Activated CD4-positive, alpha-beta memory T cell treated with anti-CD3 and anti-CD28 coated beads, Interleukin-2, amount 10 ng/mL, durations not matched to agents 7 days and 5 days (primary cell): ENCODE measurements at regions of chr1 and their contacts with region 1.

Region 1: DNA sequence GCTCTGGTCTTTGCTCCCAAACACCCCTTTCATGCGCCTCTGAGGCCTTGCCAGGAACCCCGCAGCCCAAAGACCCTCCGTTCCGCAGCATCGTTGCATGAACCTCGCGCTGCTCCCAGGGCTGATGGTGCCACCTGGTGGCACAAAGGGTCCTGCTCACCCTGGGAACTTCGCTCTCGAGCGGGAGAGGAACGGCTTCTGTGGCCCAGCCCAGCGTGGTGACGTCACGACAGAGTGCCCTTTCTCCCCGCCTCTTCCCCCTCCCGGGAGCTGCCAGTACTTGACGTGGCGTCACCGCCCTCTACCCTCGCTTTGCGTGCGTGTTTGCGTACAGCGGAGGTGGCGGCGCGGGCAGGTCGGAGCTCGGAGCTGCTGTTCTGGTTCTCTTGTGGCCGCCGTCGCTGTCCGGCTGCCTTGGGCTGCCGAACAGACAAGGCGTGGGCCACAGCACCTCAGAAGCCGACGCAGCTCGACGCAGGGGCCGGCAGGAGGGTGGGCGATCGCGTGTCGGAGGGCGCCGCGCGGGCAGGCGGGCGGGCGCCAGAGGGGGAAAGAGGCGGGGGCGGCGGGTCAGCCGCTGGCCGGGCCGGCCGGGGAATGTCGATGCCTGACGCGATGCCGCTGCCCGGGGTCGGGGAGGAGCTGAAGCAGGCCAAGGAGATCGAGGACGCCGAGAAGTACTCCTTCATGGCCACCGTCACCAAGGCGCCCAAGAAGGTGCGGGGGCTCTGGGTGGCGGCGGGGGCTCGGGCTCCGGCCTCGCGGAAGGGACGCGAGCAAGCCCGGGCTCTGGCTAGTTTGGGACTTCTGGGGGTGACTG is at the start of gene AHCYL1:
- DNase-seq: peak; percentile 99
- H3K4me3 Mint-ChIP-seq: peak within 1 kb of the TSS; percentile 99
- H3K27ac Mint-ChIP-seq: peak within 1 kb of the TSS; percentile 84
- H3K4me1 Mint-ChIP-seq: peaks cover 41% of the 10 kb centered on the region
- H3K27me3 Mint-ChIP-seq: peaks cover 2% of the 10 kb centered on the region
- total RNA-seq, gene AHCYL1: 56.5 to 57.0 TPM

Region 2: GRCh38 chr1:109649491-109649914 is 335.2 kb before region 1 on chr1:
- CTCF ChIA-PET with region 1: interaction called, 25 read pairs
- POLR2A ChIA-PET with region 1: no interaction called
- DNase-seq: no peak
- H3K4me3 Mint-ChIP-seq: no peak overlapping the region
- H3K27ac Mint-ChIP-seq: no peak overlapping the region
- H3K4me1 Mint-ChIP-seq: peaks cover 9% of the 10 kb centered on the region
- H3K27me3 Mint-ChIP-seq: peaks cover 46% of the 10 kb centered on the region

Region 3: DNA sequence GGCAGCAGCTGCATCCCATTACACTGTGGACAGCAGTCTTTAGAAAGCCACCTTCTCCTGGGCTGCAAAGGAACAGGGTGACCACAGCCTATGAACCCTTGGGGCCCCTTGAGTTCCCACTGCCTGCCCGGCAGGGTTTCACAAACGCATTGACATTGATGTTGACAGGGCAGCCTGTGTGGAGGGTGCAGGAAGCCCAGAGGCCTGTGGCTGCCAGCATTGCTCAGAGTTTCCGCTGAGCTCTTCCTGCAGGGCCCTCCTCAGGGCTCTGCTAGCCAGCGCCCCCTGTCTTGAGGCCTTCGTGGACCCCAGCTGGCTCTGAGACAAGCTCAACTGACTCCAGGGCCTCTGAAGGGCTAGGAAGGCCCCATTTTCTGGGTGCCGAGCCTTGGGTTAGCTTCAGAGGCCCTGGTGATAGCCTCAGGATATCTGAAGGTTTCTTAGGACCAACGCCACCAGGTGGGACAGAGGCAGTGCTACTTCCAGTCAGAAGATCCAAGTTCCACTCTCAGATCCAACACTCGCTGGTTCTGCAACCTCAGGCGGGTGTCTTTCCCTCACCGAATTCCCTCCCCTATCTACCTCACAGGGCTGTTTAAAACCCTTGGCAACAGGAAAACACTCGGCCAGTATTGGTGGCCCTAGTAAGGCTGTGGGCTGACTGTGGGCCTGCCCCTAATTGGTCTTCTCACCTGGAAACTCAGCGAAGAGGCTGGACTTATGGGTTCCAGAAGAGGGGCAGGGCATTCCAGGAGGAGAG is 193.8 kb before region 1 on chr1:
- CTCF ChIA-PET with region 1: interaction called, 655 read pairs
- POLR2A ChIA-PET with region 1: interaction called, 14 read pairs
- DNase-seq: peak; percentile 90
- H3K4me3 Mint-ChIP-seq: peak overlapping the region; percentile 21
- H3K27ac Mint-ChIP-seq: peak overlapping the region; percentile 95
- H3K4me1 Mint-ChIP-seq: peaks cover 92% of the 10 kb centered on the region
- H3K27me3 Mint-ChIP-seq: no peaks in the 10 kb centered on the region

Region 4: GRCh38 chr1:109910123-109910962 is 74.3 kb before region 1 on chr1 and contains the start of gene CSF1:
- CTCF ChIA-PET with region 1: interaction called, 27 read pairs
- POLR2A ChIA-PET with region 1: interaction called, 14 read pairs
- DNase-seq: peak; percentile 64
- H3K4me3 Mint-ChIP-seq: peak within 1 kb of the TSS; percentile 94
- H3K27ac Mint-ChIP-seq: peak within 1 kb of the TSS; percentile 93
- H3K4me1 Mint-ChIP-seq: peaks cover 82% of the 10 kb centered on the region
- H3K27me3 Mint-ChIP-seq: no peaks in the 10 kb centered on the region
- total RNA-seq, gene CSF1: 89.4 to 94.2 TPM

Region 5: DNA sequence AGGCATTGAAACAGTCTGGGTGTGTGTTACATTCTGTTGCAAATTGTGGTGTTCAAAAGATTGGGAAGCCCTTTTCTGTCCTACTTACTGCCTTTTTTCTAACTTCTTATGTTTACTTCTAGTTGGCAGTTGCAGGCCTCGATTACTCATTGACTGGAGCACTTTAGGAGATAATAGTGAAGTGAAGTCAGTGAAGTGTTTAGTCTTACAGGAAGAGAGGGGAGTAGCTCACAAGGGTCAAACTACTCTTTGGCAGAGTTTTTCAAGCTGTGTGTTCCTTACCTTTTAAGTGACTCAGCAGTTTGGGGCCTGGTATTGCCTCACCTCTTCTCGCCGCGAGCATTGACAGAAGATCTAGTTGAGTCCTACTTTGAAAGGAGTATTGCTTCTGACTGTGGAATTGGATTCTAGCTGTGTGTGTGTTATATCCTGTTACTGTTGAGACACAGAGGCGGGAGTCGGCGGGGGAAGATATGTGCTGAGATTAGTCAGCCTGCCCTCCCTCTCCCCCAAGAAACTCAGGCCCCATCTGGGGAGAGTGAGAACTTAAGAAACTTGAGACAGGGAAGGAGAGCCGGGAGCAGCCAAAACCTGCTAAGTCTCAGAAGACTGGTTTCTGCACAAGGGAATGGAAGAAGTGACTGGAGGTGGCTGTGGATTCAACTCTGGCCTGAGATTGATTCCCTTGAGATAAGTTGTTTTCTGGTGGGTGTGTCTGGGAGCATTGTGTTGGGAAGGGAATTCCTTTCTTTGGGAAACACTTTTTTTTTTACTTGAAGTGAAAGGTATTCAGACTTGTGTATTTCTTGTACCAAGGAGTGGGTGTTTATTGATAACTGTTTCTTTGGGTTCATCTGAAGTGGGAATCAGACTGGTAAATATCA is 19.3 kb after region 1 on chr1:
- CTCF ChIA-PET with region 1: interaction called, 61 read pairs
- POLR2A ChIA-PET with region 1: interaction called, 15 read pairs
- DNase-seq: peak; percentile 49
- H3K4me3 Mint-ChIP-seq: no peak overlapping the region
- H3K27ac Mint-ChIP-seq: peak overlapping the region; percentile 41
- H3K4me1 Mint-ChIP-seq: peaks cover 25% of the 10 kb centered on the region
- H3K27me3 Mint-ChIP-seq: no peaks in the 10 kb centered on the region